ENCODE measurements at regions of chr5 and their contacts with region 1.

Region 1: DNA sequence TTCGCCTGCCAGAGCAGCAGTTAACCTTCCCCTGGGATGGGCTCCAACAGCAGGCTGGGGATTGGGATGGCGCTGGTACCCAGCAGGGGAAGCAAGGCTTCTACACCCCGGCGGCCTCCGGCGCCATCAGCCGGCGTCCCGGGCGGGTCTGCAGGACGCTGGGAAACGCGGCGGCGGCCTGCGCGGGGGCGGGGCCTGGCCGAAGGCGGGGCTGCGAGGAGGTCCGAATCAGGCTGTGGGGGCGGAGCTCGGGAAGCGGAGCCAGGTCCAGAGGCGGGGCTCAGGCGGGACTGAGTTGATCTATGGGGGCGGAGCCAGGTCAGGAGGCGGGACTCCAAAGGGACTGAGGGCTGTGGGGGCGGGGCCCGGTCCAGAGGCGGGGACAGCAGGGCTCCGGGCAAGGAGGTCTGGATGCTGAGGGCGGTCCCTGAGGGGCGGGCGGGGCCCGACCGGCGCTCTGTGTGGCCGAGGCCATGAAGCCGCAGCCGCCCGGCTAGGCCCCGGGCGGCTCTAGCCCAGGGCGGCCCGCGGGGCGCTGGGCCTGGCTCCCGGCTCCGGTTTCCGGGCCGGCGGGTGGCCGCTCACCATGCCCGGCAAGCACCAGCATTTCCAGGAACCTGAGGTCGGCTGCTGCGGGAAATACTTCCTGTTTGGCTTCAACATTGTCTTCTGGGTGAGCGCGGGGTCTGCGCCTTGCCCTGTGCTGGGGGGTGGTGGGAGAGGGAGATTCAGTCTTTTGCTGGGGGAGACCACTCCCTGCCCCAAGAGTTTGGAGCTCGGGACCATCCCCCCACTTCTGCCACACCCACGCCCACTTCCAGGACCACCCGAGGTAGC is at the start of gene TSPAN17:
- DNase-seq: peak; percentile 87 to 99 (median 89)
- ATAC-seq: peak; percentile 97
- H3K4me3 ChIP-seq: peak within 1 kb of the TSS; percentile 50
- H3K4me3 Mint-ChIP-seq: peak within 1 kb of the TSS; percentile 79 to 94 (median 89)
- H3K27ac ChIP-seq: peak within 1 kb of the TSS; percentile 68
- H3K27ac Mint-ChIP-seq: peak within 1 kb of the TSS; percentile 79 to 95 (median 90)
- H3K4me1 ChIP-seq: peaks cover 21 to 28% of the 10 kb centered on the region in 2 donors
- H3K4me1 Mint-ChIP-seq: peaks cover 29 to 55% (median 45%) of the 10 kb centered on the region in 7 donors
- H3K27me3 ChIP-seq: no peaks in the 10 kb centered on the region
- H3K27me3 Mint-ChIP-seq: no peaks in the 10 kb centered on the region
- total RNA-seq, gene TSPAN17: 16.6 to 47.6 (median 21.1) TPM

Region 2: GRCh38 chr5:175517818-175518450 is 1129.3 kb before region 1 on chr5:
- CTCF ChIA-PET with region 1: no interaction called
- POLR2A ChIA-PET with region 1: no interaction called
- intact Hi-C with region 1: loop called in 1 of 2 experiments (anchors 10 kb)
- DNase-seq: peak in 2 of 9 donors; percentile 62 to 81
- ATAC-seq: no peak
- H3K4me3 ChIP-seq: no peak overlapping the region
- H3K4me3 Mint-ChIP-seq: peak overlapping the region; percentile 26 to 80 (median 54)
- H3K27ac ChIP-seq: peak overlapping the region; percentile 22
- H3K27ac Mint-ChIP-seq: peak overlapping the region; percentile 60 to 97 (median 93)
- H3K4me1 ChIP-seq: peaks cover 44 to 50% of the 10 kb centered on the region in 2 donors
- H3K4me1 Mint-ChIP-seq: peaks cover 47 to 87% (median 76%) of the 10 kb centered on the region in 7 donors
- H3K27me3 ChIP-seq: no peaks in the 10 kb centered on the region
- H3K27me3 Mint-ChIP-seq: no peaks in the 10 kb centered on the region

Region 3: GRCh38 chr5:176415952-176416924 is 231.0 kb before region 1 on chr5 and contains the start of gene CLTB:
- CTCF ChIA-PET with region 1: no interaction called
- POLR2A ChIA-PET with region 1: no interaction called
- intact Hi-C with region 1: loop called (anchors 1 to 2 kb)
- DNase-seq: peak; percentile 73 to 86 (median 84)
- ATAC-seq: peak; percentile 97
- H3K4me3 ChIP-seq: peak within 1 kb of the TSS; percentile 52
- H3K4me3 Mint-ChIP-seq: peak within 1 kb of the TSS; percentile 74 to 89 (median 84)
- H3K27ac ChIP-seq: peak within 1 kb of the TSS; percentile 86
- H3K27ac Mint-ChIP-seq: peak within 1 kb of the TSS; percentile 71 to 91 (median 87)
- H3K4me1 ChIP-seq: peaks cover 21 to 28% of the 10 kb centered on the region in 2 donors
- H3K4me1 Mint-ChIP-seq: peaks cover 17 to 53% (median 47%) of the 10 kb centered on the region in 7 donors
- H3K27me3 ChIP-seq: no peaks in the 10 kb centered on the region
- H3K27me3 Mint-ChIP-seq: peaks cover 0 to 19% (median 0%) of the 10 kb centered on the region in 5 donors
- total RNA-seq, gene CLTB: 30.6 to 67.2 (median 63.8) TPM

Region 4: GRCh38 chr5:176573564-176574296 is 73.5 kb before region 1 on chr5:
- CTCF ChIA-PET with region 1: no interaction called
- POLR2A ChIA-PET with region 1: no interaction called
- intact Hi-C with region 1: loop called in 1 of 2 experiments (anchors 2 kb)
- DNase-seq: peak; percentile 48 to 80 (median 67)
- ATAC-seq: peak; percentile 88
- H3K4me3 ChIP-seq: no peak overlapping the region
- H3K4me3 Mint-ChIP-seq: no peak overlapping the region
- H3K27ac ChIP-seq: no peak overlapping the region
- H3K27ac Mint-ChIP-seq: peak overlapping the region in 1 of 9 donors; percentile 46
- H3K4me1 ChIP-seq: no peaks in the 10 kb centered on the region
- H3K4me1 Mint-ChIP-seq: peaks cover 0 to 11% (median 6%) of the 10 kb centered on the region in 7 donors
- H3K27me3 ChIP-seq: no peaks in the 10 kb centered on the region
- H3K27me3 Mint-ChIP-seq: peaks cover 0 to 4% (median 0%) of the 10 kb centered on the region in 5 donors

Region 5: GRCh38 chr5:176619203-176619568 is 28.1 kb before region 1 on chr5:
- CTCF ChIA-PET with region 1: interaction called, 3 read pairs
- POLR2A ChIA-PET with region 1: interaction called, 3 read pairs
- intact Hi-C with region 1: loop called in 1 of 2 experiments (anchors 1 kb)
- DNase-seq: peak; percentile 34 to 83 (median 63)
- ATAC-seq: peak; percentile 92
- H3K4me3 ChIP-seq: peak overlapping the region; percentile 13
- H3K4me3 Mint-ChIP-seq: peak overlapping the region; percentile 40 to 80 (median 60)
- H3K27ac ChIP-seq: no peak overlapping the region
- H3K27ac Mint-ChIP-seq: no peak overlapping the region
- H3K4me1 ChIP-seq: peaks cover 0 to 14% of the 10 kb centered on the region in 2 donors
- H3K4me1 Mint-ChIP-seq: peaks cover 8 to 23% (median 14%) of the 10 kb centered on the region in 7 donors
- H3K27me3 ChIP-seq: peaks cover 4 to 8% of the 10 kb centered on the region in 2 donors
- H3K27me3 Mint-ChIP-seq: peaks cover 46 to 85% (median 51%) of the 10 kb centered on the region in 5 donors

Region 6: GRCh38 chr5:176667637-176668036 is 20.4 kb after region 1 on chr5:
- CTCF ChIA-PET with region 1: no interaction called
- POLR2A ChIA-PET with region 1: no interaction called
- intact Hi-C with region 1: no loop called
- DNase-seq: no peak
- ATAC-seq: no peak
- H3K4me3 ChIP-seq: no peak overlapping the region
- H3K4me3 Mint-ChIP-seq: no peak overlapping the region
- H3K27ac ChIP-seq: no peak overlapping the region
- H3K27ac Mint-ChIP-seq: no peak overlapping the region
- H3K4me1 ChIP-seq: no peaks in the 10 kb centered on the region
- H3K4me1 Mint-ChIP-seq: peaks cover 0 to 4% (median 0%) of the 10 kb centered on the region in 7 donors
- H3K27me3 ChIP-seq: no peaks in the 10 kb centered on the region
- H3K27me3 Mint-ChIP-seq: peaks cover 6 to 42% (median 26%) of the 10 kb centered on the region in 5 donors

Region 7: DNA sequence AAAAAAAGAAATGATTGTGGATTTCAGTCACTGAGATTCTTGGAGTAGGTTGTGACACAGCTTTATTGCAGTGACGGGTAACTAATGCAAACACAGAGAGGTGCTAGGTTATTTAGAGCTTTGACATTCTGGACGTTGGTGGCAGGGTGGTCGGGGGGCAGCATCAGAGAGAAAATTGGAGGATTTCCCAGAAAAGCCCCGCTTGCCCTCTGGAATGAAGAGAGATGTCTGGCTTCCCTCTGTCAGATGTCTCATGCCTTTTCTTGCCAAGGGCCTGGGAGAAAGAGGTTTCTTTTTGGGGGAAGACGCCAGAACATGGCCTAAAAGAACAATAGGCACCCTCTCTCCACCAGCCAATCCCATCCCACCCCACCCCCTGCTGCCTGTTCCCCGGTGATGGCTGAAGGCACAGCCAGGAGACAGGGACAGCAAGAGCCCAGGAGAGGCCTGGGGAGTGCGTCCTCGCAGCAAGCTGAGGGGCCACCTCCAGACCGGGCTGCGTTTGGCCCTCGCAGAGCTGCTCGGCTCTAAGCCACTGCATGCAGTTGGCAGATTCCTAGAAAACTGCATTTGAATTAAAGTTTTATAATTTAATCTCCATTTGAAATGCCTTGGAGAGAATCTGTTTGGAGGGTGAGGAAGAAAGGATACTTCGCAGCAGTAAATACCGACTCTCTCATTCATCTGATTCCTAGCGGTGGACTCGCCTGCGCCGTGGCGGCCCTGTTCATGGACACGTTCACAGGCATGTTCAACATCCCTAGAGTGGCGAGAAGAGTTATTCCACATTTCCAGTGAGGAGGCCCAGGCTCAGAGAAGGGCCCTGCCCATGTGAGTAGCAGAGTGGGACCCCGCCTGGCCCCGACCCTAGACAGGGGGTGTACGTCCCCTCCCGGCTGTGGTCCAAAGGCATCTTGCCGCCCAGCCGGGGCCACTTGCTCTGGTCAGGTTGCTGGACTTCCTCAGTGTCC is 55.7 kb after region 1 on chr5:
- CTCF ChIA-PET with region 1: no interaction called
- POLR2A ChIA-PET with region 1: no interaction called
- intact Hi-C with region 1: no loop called
- DNase-seq: no peak
- ATAC-seq: no peak
- H3K4me3 ChIP-seq: no peak overlapping the region
- H3K4me3 Mint-ChIP-seq: no peak overlapping the region
- H3K27ac ChIP-seq: no peak overlapping the region
- H3K27ac Mint-ChIP-seq: no peak overlapping the region
- H3K4me1 ChIP-seq: no peaks in the 10 kb centered on the region
- H3K4me1 Mint-ChIP-seq: no peaks in the 10 kb centered on the region
- H3K27me3 ChIP-seq: no peaks in the 10 kb centered on the region
- H3K27me3 Mint-ChIP-seq: peaks cover 11 to 47% (median 43%) of the 10 kb centered on the region in 5 donors

Region 8: DNA sequence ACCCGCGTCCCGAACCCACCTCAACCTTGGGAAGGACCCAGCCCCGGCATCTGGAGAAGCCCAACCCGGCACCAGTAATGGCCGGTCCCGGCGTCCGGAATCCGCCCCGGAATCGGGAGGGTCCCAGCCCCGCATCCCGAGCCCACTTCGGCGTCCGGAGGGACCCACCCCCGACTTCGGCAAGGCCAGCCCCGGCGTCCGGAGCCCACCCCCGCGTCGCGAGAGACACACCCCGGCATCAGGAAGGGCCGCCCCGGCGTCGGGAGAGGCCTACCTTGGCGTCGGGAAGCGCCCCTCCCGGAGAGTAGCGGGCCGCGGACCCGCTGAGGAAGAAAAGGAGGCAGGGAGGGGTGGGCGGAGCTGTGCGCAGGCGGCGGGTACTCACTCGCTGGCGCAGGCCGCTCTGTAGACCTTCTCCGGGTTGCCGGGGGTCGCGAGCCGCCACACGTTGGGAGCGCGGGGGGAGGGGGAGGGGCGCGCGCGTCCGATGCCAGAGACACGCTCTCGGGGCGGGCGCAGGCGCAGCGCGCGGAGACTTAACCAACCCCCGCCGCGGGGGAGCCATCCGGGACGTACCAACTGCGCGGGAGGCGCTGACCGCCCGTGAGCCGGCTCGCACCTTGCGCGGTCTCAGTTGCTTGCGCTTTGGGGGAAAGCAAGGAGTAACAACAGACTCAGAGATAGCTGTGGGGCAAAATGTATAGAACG is 359.2 kb after region 1 on chr5 and contains the start of gene UIMC1:
- CTCF ChIA-PET with region 1: no interaction called
- POLR2A ChIA-PET with region 1: no interaction called
- intact Hi-C with region 1: loop called in 1 of 2 experiments (anchors 1 kb)
- DNase-seq: peak; percentile 84 to 96 (median 89)
- ATAC-seq: peak; percentile 96
- H3K4me3 ChIP-seq: peak within 1 kb of the TSS; percentile 75
- H3K4me3 Mint-ChIP-seq: peak within 1 kb of the TSS; percentile 90 to 96 (median 94)
- H3K27ac ChIP-seq: peak within 1 kb of the TSS; percentile 85
- H3K27ac Mint-ChIP-seq: peak within 1 kb of the TSS; percentile 87 to 97 (median 93)
- H3K4me1 ChIP-seq: peaks cover 18% of the 10 kb centered on the region in 2 donors
- H3K4me1 Mint-ChIP-seq: peaks cover 14 to 35% (median 28%) of the 10 kb centered on the region in 7 donors
- H3K27me3 ChIP-seq: no peaks in the 10 kb centered on the region
- H3K27me3 Mint-ChIP-seq: no peaks in the 10 kb centered on the region
- total RNA-seq, gene UIMC1: 52.9 to 60.8 (median 59.9) TPM

Region 9: GRCh38 chr5:177592010-177592834 is 945.0 kb after region 1 on chr5 and contains the start of gene TMED9:
- CTCF ChIA-PET with region 1: no interaction called
- POLR2A ChIA-PET with region 1: no interaction called
- intact Hi-C with region 1: loop called in 1 of 2 experiments (anchors 10 kb)
- DNase-seq: peak; percentile 83 to 92 (median 90)
- ATAC-seq: peak; percentile 99
- H3K4me3 ChIP-seq: peak within 1 kb of the TSS; percentile 95
- H3K4me3 Mint-ChIP-seq: peak within 1 kb of the TSS; percentile 81 to 100 (median 96)
- H3K27ac ChIP-seq: peak within 1 kb of the TSS; percentile 71
- H3K27ac Mint-ChIP-seq: peak within 1 kb of the TSS; percentile 83 to 99 (median 95)
- H3K4me1 ChIP-seq: peaks cover 16% of the 10 kb centered on the region in 2 donors
- H3K4me1 Mint-ChIP-seq: peaks cover 18 to 35% (median 22%) of the 10 kb centered on the region in 7 donors
- H3K27me3 ChIP-seq: no peaks in the 10 kb centered on the region
- H3K27me3 Mint-ChIP-seq: peaks cover 8 to 29% (median 12%) of the 10 kb centered on the region in 5 donors
- total RNA-seq, gene TMED9: 50.5 to 144 (median 67.5) TPM